ENCODE measurements at regions of chr1 and their contacts with region 1.

Region 1: DNA sequence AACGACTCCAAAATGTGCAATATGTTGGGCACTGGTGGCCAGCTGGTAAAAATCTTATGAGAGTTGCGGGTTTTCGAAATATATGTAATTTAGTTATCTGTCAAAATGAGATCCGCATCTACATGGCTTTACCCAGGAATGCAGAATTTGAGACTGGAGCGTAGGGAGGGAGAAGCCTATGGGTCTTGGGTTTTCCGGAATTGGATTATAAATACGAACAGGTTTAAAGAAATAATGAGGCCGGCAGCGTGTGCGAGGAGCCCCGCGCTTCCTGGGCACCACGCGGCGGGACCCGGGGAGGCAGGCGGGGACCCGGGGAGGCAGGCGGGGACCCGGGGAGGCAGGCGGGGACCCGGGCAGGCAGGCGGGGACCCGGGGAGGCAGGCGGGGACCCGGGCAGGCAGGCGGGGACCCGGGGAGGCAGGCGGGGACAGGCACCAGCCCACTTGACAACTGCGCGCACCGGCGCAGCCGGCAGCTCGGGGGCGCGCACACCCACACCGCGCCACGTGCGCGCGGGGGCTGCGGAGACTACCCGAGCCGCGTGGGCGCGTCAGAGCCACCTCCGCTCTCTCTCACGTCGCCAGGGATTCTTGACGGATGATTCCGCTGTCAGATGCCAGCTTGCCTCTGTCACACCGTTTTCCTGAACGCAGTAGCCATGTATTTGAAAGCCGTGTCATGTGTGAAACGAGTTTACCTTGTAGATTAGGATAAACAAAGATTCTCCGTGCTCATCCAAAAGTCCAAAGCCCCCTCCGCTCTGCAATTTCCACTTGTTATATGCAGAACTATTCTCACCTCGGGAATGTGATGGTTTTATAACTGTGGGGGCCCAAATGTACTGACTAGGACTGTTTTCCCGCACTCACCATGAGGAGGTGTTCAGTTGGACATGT is 54.3 kb upstream of the HNRNPU start:
- DNase-seq: peak; percentile 70 to 86
- ATAC-seq: peak; percentile 84 to 93 (median 88)
- H3K4me3 ChIP-seq: peak overlapping the region; percentile 67
- H3K27ac ChIP-seq: peak overlapping the region; percentile 91
- H3K4me1 ChIP-seq: peaks cover 23% of the 10 kb centered on the region
- H3K27me3 ChIP-seq: no peaks in the 10 kb centered on the region
- CTCF ChIP-seq: peak; percentile 21

Region 2: DNA sequence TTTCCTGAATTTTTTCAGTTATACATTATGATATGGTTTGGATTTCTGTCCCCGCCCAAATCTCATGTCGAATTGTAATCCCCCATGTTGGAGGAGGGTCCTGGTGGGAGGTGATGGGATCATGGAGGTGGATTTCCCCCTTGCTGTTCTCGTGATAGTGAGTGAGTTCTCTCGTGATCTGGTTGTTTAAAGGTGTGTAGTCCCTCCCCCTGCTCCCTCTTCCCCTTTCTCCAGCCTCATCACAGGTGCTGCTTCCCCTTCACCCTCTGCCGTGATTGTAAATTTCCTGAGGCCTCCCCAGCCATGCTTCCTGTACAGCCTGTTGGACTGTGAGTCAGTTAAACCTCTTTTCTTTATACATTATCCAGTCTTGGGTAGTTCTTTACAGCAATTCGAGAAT is 38.9 kb after region 1 on chr1:
- intact Hi-C with region 1: loop called in 1 of 2 experiments (anchors 5 kb)
- DNase-seq: no peak
- ATAC-seq: no peak
- H3K4me3 ChIP-seq: no peak overlapping the region
- H3K27ac ChIP-seq: peak overlapping the region; percentile 20
- H3K4me1 ChIP-seq: peaks cover 59% of the 10 kb centered on the region
- H3K27me3 ChIP-seq: no peaks in the 10 kb centered on the region
- CTCF ChIP-seq: no peak

Region 3: GRCh38 chr1:244964112-244964971 is 45.7 kb after region 1 on chr1:
- intact Hi-C with region 1: loop called (anchors 2 to 5 kb)
- DNase-seq: no peak
- ATAC-seq: peak in 1 of 4 donors; percentile 26
- H3K4me3 ChIP-seq: no peak overlapping the region
- H3K27ac ChIP-seq: peak overlapping the region; percentile 88
- H3K4me1 ChIP-seq: peaks cover 71% of the 10 kb centered on the region
- H3K27me3 ChIP-seq: no peaks in the 10 kb centered on the region
- CTCF ChIP-seq: no peak

Region 4: DNA sequence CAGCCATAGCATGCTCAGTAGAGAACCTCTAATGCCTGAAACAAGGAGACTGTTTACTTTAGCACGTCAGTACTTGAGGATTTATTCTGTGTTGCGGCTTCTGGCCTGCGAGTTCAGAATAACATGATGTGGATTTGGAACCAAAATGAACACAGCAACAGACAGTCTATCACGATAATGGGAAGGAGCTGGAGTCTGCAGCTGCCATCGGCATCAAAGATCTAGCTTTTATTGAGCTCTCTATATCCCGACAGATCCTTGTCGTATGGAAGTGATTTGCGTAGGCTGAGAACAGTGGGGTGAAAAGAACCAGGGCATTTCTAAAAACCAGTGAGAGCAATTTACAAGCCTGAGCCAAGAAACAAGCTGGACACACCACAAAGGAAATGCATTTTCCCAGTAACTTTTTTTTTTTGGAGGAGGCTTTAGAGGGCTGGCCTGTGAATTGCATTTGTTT is 530.3 kb after region 1 on chr1:
- intact Hi-C with region 1: no loop called
- DNase-seq: no peak
- ATAC-seq: no peak
- H3K4me3 ChIP-seq: no peak overlapping the region
- H3K27ac ChIP-seq: no peak overlapping the region
- H3K4me1 ChIP-seq: no peaks in the 10 kb centered on the region
- H3K27me3 ChIP-seq: no peaks in the 10 kb centered on the region
- CTCF ChIP-seq: no peak

Measured in psoas muscle (tissue), 8 donors.